Cardiac septum (tissue), 1 donor: ENCODE measurements at regions of chr2 and their contacts with region 1.

Region 1: DNA sequence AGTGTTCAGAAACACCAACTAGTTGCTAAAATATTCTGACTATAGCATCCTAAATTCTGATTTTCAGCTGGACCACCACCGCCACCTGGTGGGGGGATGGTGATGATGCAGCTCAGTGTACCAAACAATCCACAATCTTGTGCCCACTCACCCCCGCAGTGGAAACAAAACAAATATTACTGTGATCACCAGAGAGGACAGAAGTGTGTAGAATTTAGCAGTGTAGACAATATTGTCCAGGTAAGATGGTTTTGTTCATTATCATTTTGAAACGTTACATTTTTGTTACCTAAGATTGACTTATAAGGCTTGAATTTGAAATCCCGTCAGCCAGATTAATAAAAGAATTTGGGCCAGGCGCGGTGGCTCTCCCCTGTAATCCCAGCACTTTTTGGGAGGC is 31.7 kb upstream of the UBXN4 start:
- DNase-seq: no peak

Region 2: GRCh38 chr2:135004005-135004746 is 705.8 kb before region 1 on chr2:
- intact Hi-C with region 1: loop called (anchors 2 kb)
- DNase-seq: peak; percentile 81

Region 3: DNA sequence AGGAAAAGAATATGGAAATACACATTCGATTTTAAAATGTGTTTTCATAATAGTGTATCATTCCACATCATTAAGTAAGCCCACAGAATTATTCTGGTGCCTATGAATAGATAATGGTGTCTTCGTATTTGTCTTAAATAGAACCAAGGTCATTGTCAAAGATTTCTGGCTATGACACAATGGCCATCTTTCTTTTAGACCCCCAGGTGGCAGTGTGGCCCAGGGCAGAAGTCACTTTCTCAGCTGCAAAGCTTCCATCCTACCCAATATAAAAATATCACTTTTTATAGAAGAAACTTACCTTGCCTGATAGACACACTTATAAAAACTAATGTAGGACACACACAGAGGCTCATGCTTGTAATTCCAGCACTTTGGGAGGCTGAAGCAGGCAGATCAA is 236.4 kb before region 1 on chr2:
- intact Hi-C with region 1: loop called (anchors 10 kb)
- DNase-seq: no peak

Region 4: GRCh38 chr2:135843671-135844070 is 133.7 kb after region 1 on chr2:
- intact Hi-C with region 1: no loop called
- DNase-seq: no peak